ENCODE measurements at regions of chr7 and their contacts with region 1.

Region 1: GRCh38 chr7:25069900-25070443 is 55.1 kb downstream of the CYCS start:
- DNase-seq: no peak

Region 2: DNA sequence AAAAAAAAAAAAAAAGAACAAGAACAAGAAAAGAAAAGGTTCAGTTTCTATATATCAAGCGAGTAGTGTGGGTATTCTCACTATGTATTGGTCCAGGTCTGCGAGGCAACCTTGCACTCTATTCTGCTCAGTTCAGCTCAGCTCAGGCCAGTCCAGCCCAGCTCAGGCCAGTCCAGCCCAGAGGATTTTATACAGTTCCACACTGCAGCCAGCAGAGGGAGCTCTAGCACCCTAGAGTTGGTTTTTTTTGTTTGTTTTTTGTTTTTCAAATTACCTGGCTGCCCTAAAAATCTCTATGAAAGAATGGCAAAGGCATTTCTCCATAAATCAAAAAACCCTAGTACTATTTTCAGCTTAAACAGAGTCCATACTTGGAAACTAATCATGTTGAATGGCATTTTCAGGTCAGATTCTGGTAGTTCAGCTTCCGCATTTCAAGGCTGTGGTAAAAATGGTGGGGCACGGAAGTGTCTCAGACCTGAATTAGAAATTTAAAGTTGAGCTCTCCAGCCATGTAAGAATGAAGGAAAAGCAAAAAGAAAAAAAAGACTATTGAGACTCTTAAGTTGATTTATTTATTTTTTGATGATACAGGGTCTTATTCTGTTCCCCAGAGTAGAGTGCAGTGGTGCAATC is 257.5 kb before region 1 on chr7:
- intact Hi-C with region 1: loop called (anchors 2 kb)
- DNase-seq: no peak

Region 3: DNA sequence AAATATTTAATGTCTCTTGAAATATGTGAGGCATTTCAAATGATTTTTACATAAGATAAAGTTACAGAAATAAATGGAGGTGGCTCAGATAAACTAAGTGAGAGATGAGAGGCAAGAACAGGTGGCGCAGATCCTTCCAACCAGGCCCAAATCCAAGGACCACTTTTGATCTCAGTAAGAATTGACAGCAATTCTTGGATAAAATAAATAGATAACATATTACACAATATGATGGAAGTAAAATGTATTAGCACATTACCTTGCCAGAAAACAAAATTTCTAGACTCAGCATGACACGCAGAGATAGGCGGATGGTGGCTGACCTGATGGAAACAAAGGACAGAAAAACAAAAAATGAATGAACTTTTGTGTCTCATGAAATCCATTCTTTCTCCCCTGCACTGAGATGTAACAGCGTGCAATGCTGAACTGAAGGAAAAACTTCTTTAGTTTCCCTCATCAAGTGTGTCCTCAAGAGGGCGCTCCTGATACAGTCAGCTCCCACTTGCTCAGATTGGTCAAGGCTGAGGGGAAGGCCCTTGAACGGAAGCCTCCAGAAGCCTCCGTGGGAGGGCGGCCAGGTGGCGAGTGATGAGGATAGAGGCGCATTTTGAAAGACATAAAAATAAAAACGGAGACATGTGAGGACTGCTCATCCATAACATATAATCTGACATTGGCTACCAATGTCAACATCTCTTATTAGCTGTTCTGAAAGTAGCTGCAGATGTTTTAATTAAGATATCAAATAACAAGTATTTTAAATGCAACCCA is 249.9 kb before region 1 on chr7:
- intact Hi-C with region 1: loop called (anchors 2 kb)
- DNase-seq: no peak

Region 4: DNA sequence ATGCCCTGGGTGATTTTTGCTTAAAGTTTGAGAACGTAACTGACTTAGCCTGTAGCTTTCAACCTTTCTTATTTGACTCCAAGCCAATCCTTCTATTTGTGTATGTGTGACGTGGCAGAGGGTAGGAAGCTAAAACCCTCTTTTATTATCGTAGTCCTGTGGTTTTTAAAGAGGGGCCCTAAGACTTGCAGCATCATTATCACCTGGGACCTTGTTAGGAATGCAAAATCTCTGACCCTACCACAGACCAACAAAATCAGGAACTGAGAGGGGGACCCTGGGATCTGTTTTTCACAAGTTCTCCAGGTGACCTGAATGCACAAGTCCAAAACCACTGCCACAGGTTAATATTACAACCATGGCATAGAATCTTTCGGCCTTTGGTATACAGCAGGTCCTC is 170.1 kb before region 1 on chr7:
- intact Hi-C with region 1: loop called (anchors 5 kb)
- DNase-seq: no peak

Region 5: DNA sequence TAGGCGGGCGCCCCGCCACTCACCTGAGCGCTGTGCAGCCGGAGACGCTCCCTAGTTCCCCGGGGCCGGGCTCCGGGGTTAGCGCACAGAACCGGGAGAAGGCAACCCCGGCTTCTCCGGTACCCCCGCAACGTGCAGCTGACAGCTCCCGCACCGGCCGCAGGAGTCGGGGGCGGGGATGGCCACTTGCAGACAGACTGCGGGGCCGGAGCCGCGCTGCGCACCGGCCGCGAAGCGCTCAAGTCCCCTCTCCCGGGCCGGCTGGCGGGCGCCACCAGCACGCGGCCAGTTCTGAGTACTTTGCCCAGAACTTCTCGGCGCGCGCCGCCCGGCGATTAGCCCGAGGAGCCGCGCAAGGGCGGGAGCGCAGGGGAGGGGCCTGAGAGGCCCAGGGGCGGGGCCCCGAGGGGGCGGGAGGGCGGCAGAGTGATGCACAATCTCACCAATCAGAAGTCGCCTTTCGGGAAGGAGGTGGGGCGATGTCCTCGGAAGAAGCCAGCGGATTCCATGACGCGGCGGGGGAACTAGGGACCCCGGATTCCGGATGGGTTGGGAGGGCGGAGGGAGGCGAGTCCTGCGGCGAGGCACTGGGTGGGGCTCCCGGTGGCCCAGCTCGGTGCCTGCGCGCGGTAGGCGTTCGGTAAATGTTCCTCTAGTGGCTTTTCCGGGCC is 90.0 kb before region 1 on chr7 and contains the start of gene OSBPL3:
- intact Hi-C with region 1: loop called (anchors 5 kb)
- DNase-seq: peak; percentile 97
- total RNA-seq, gene OSBPL3: 2.4 TPM